Activated naive CD4-positive, alpha-beta T cell treated with anti-CD3 and anti-CD28 coated beads for 36 hours (primary cell): ENCODE measurements at regions of chr17 and their contacts with region 1.

Region 1: DNA sequence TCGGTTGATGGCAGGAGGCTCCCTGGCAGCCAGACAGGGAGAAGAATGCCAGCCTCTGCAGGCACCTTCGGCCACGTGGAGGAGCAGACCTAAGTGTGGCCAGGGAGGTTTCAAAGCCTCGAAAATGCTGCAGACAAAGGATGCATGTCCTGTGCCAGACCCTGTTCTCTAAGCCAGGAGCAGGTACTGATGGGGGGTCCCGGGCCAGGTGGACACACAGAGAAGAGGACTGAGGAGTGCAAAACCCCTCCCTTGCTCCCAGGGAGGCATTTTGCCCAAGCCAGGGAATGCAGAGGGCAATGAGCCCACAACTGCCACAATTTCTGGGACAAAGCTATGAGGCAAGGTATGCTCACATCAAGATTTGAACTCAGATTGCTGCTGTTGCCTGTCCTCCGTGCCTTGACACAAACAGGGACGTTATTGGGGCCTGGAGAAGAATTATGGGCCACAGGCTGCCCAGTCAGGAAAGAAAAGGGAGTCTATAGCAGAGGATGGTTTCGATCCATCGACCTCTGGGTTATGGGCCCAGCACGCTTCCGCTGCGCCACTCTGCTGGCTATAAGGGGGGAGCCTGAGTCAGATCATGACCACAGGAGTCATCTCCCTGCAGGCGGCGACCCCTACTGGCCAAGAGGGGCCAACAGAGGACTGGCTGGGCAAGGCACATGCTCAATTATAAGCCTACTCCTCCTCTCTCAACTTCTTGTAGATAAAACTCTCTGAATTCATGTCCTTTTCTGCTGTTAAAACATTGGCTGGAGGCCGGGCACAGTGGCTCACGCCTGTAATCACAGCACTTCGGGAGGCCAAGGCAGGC is 25.1 kb upstream of the FOXK2 start:
- DNase-seq: peak; percentile 94
- H3K4me3 Mint-ChIP-seq: peak overlapping the region; percentile 70
- H3K27ac Mint-ChIP-seq: peak overlapping the region; percentile 81
- H3K4me1 Mint-ChIP-seq: peaks cover 21% of the 10 kb centered on the region
- H3K27me3 Mint-ChIP-seq: no peaks in the 10 kb centered on the region

Region 2: DNA sequence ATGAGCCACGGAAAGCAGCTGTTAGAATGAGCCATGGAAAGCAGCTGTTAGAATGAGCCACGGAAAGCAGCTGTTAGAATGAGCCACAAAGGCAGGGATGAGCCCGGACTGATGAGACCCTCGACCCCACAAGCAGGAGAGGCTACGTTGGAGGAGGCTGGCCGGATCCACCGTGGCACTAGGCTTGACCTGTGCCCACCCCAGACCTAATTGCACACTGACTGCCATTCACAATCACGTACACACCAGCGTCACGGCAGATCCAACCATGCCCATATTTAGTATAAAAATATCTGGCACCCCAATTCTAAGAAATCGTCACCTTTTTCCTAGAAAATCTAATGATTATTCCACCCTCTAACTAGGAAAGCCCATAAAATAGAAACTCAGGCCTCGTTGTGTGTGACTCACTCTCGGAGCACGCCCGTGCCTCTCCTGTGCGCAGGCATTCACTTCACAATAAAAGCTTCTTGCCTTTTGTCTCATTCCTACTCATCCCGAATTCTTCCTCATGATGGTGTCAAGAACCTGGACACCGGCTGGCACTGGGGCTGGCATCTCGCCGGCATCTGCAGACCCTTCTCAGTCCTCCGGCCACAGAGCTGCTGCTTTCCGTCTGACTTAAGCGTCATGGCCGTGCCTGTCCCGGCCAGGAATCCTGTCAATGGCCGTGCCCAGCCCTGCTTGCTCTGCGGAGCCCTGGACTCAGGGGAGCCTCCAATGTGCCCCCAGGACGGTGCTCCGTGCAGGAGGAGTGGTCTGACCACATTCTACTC is 155.4 kb before region 1 on chr17:
- CTCF ChIA-PET with region 1: no interaction called
- intact Hi-C with region 1: no loop called
- DNase-seq: no peak
- H3K4me3 Mint-ChIP-seq: no peak overlapping the region
- H3K27ac Mint-ChIP-seq: no peak overlapping the region
- H3K4me1 Mint-ChIP-seq: peaks cover 20% of the 10 kb centered on the region
- H3K27me3 Mint-ChIP-seq: no peaks in the 10 kb centered on the region

Region 3: DNA sequence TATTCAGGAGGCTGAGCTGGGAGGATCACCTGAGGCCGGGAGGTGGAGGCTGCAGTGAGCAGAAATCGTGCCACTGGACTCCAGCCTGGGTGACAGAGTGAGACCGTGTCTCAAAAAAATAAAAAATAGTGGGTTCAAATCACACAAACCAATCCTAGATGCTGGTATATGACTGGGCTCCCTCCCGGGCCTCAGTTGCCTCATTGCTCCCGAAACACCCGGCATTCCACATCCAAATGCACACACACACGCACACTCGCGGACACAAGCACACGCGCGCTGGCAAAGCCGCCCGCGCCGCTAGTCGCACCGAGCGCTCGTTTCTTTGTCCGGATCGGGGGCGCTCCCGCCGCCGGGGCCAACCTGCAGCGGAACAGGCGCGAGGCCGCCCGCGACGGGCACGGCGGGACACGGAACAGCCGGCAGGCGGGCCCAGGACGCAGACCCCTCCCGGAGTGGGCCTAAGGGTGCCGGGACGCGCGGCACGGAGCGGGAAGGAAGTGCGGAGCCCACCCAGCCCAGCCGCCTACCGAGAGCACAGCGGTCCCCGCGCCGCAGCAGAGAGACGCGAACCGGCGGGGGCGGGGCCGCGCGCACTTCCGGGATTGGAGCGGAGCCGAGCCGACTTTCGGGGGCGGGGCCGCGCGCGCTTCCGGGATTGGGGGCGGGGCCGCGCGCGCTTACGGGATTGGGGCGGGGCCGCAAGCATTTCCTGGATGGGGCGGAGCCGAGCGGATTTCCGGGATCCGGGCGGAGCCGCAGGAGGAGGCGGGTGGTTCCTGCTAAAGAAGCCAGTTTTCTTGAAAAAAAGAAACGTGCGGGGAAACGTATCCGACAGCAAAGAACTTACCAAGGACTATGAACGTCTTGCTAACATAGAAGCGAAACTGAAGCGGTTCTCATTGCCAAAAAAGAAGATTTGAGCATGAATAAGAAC is 44.0 kb before region 1 on chr17 and contains the start of gene CYBC1:
- CTCF ChIA-PET with region 1: no interaction called
- intact Hi-C with region 1: loop called (anchors 1 kb)
- DNase-seq: peak; percentile 97
- H3K4me3 Mint-ChIP-seq: peak within 1 kb of the TSS; percentile 94
- H3K27ac Mint-ChIP-seq: peak within 1 kb of the TSS; percentile 99
- H3K4me1 Mint-ChIP-seq: peaks cover 41% of the 10 kb centered on the region
- H3K27me3 Mint-ChIP-seq: no peaks in the 10 kb centered on the region
- total RNA-seq, gene CYBC1: 292 to 294 TPM

Region 4: GRCh38 chr17:82518826-82519810 is 24.7 kb after region 1 on chr17 and contains the start of gene FOXK2:
- CTCF ChIA-PET with region 1: interaction called, 5 read pairs
- intact Hi-C with region 1: loop called (anchors 2 kb)
- DNase-seq: peak; percentile 93
- H3K4me3 Mint-ChIP-seq: peak within 1 kb of the TSS; percentile 88
- H3K27ac Mint-ChIP-seq: peak within 1 kb of the TSS; percentile 84
- H3K4me1 Mint-ChIP-seq: peaks cover 26% of the 10 kb centered on the region
- H3K27me3 Mint-ChIP-seq: no peaks in the 10 kb centered on the region
- total RNA-seq, gene FOXK2: 48.8 to 51.4 TPM

Region 5: GRCh38 chr17:82751571-82752370 is 257.3 kb after region 1 on chr17 and contains the start of gene TBCD:
- CTCF ChIA-PET with region 1: no interaction called
- intact Hi-C with region 1: loop called (anchors 10 kb)
- DNase-seq: peak; percentile 90
- H3K4me3 Mint-ChIP-seq: peak within 1 kb of the TSS; percentile 79
- H3K27ac Mint-ChIP-seq: peak within 1 kb of the TSS; percentile 18
- H3K4me1 Mint-ChIP-seq: peaks cover 26% of the 10 kb centered on the region
- H3K27me3 Mint-ChIP-seq: no peaks in the 10 kb centered on the region
- total RNA-seq, gene TBCD: 71.8 to 75.3 TPM